Activated CD4-positive, alpha-beta memory T cell treated with anti-CD3 and anti-CD28 coated beads for 36 hours (primary cell): ENCODE measurements at regions of chr10 and their contacts with region 1.

Region 1: GRCh38 chr10:118459726-118460193 is 117.6 kb upstream of the FAM204A start:
- DNase-seq: peak; percentile 62
- H3K4me3 Mint-ChIP-seq: no peak overlapping the region
- H3K27ac Mint-ChIP-seq: no peak overlapping the region
- H3K4me1 Mint-ChIP-seq: peaks cover 4% of the 10 kb centered on the region
- H3K27me3 Mint-ChIP-seq: peaks cover 21% of the 10 kb centered on the region

Region 2: DNA sequence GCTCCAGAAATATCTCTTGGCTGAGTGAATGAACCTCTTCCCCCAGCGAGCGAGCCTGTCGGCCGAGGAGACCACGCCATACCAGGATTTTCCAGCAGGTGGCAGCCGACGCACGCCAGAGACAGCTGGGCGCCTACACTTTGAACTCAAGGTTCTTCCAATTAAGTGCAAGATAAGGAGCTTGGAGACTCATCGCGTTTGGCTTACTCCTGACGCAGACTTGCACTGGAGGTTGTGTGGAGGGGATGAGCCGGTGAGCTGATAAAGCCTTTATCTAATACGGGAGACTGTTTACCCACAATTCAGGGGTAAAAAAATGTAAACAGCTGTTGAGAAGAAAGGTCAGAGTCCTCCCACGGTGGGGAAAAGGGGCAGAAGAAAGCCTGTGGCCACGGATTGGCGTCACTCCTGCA is 963.1 kb before region 1 on chr10:
- CTCF ChIA-PET with region 1: interaction called, 52 read pairs
- POLR2A ChIA-PET with region 1: no interaction called
- intact Hi-C with region 1: loop called (anchors 1 kb)
- DNase-seq: peak; percentile 79
- H3K4me3 Mint-ChIP-seq: no peak overlapping the region
- H3K27ac Mint-ChIP-seq: no peak overlapping the region
- H3K4me1 Mint-ChIP-seq: no peaks in the 10 kb centered on the region
- H3K27me3 Mint-ChIP-seq: peaks cover 21% of the 10 kb centered on the region

Region 3: GRCh38 chr10:118341791-118342637 is 117.7 kb before region 1 on chr10 and contains the start of gene FAM204A:
- CTCF ChIA-PET with region 1: interaction called, 3 read pairs
- POLR2A ChIA-PET with region 1: no interaction called
- intact Hi-C with region 1: loop called (anchors 1 kb)
- DNase-seq: peak; percentile 98
- H3K4me3 Mint-ChIP-seq: peak within 1 kb of the TSS; percentile 92
- H3K27ac Mint-ChIP-seq: peak within 1 kb of the TSS; percentile 87
- H3K4me1 Mint-ChIP-seq: peaks cover 42% of the 10 kb centered on the region
- H3K27me3 Mint-ChIP-seq: no peaks in the 10 kb centered on the region
- total RNA-seq, gene FAM204A: 63.5 to 64.8 TPM

Region 4: GRCh38 chr10:118430190-118430589 is 29.6 kb before region 1 on chr10:
- CTCF ChIA-PET with region 1: interaction called, 10 read pairs
- POLR2A ChIA-PET with region 1: no interaction called
- intact Hi-C with region 1: no loop called
- DNase-seq: no peak
- H3K4me3 Mint-ChIP-seq: no peak overlapping the region
- H3K27ac Mint-ChIP-seq: no peak overlapping the region
- H3K4me1 Mint-ChIP-seq: no peaks in the 10 kb centered on the region
- H3K27me3 Mint-ChIP-seq: peaks cover 5% of the 10 kb centered on the region

Region 5: GRCh38 chr10:118449521-118449920 is 10.2 kb before region 1 on chr10:
- CTCF ChIA-PET with region 1: interaction called, 17 read pairs
- POLR2A ChIA-PET with region 1: no interaction called
- intact Hi-C with region 1: no loop called
- DNase-seq: no peak
- H3K4me3 Mint-ChIP-seq: no peak overlapping the region
- H3K27ac Mint-ChIP-seq: no peak overlapping the region
- H3K4me1 Mint-ChIP-seq: no peaks in the 10 kb centered on the region
- H3K27me3 Mint-ChIP-seq: peaks cover 15% of the 10 kb centered on the region

Region 6: GRCh38 chr10:118471863-118472262 is 12.1 kb after region 1 on chr10:
- CTCF ChIA-PET with region 1: interaction called, 66 read pairs
- POLR2A ChIA-PET with region 1: no interaction called
- intact Hi-C with region 1: no loop called
- DNase-seq: no peak
- H3K4me3 Mint-ChIP-seq: no peak overlapping the region
- H3K27ac Mint-ChIP-seq: no peak overlapping the region
- H3K4me1 Mint-ChIP-seq: no peaks in the 10 kb centered on the region
- H3K27me3 Mint-ChIP-seq: peaks cover 18% of the 10 kb centered on the region

Region 7: GRCh38 chr10:118543714-118544400 is 84.1 kb after region 1 on chr10:
- CTCF ChIA-PET with region 1: interaction called, 10 read pairs
- POLR2A ChIA-PET with region 1: no interaction called
- intact Hi-C with region 1: no loop called
- DNase-seq: peak; percentile 60
- H3K4me3 Mint-ChIP-seq: no peak overlapping the region
- H3K27ac Mint-ChIP-seq: no peak overlapping the region
- H3K4me1 Mint-ChIP-seq: no peaks in the 10 kb centered on the region
- H3K27me3 Mint-ChIP-seq: peaks cover 36% of the 10 kb centered on the region